Common myeloid progenitor, CD34-positive (primary cell): ENCODE measurements at regions of chr15 and their contacts with region 1.

Region 1: DNA sequence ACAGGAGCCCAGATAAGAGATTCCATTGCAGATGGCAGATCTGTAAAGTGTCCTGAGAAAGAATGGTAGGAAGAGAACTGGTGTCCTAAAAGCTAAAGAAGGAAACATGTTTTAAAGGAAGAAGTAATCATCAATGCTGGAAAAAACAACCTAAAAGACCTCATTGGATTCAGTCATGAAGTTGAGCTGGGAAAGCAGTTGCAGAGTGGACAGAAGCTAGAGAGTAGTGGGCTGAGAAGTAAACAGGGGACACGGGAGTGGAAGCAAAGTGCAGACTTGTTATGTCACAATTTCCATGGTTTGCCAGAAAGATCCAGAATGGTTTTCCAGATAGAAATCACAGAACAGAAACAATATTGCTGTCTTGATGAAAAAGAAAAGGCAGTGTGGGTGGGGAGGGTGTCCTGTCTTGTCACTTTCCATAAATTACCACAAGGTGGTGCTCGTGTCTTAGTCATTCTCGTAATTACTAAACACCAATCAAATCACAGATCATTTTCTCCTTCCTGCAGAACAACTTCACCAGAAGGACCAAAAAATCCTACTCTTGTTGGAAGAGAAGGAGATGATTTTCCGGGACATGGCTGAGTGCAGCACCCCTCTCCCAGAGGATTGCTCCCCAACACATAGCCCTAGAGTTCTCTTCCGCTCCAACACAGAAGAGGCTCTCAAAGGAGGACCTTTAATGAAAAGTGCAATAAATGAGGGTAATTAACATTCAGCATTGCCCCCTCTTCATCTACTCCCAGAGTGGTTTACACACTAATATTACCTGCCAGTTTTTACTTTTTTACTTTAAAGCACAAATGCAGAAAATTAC is 64.5 kb downstream of the KLHL25 start:
- DNase-seq: peak; percentile 59 to 79 (median 74)
- H3K4me3 ChIP-seq: no peak overlapping the region
- H3K27ac ChIP-seq: no peak overlapping the region
- H3K4me1 ChIP-seq: no peaks in the 10 kb centered on the region
- H3K27me3 ChIP-seq: no peaks in the 10 kb centered on the region

Region 2: GRCh38 chr15:85831415-85832113 is 101.4 kb after region 1 on chr15:
- CTCF ChIA-PET with region 1: interaction called, 17 read pairs
- POLR2A ChIA-PET with region 1: interaction called, 3 read pairs
- DNase-seq: peak; percentile 29 to 55 (median 51)
- H3K4me3 ChIP-seq: no peak overlapping the region
- H3K27ac ChIP-seq: no peak overlapping the region
- H3K4me1 ChIP-seq: no peaks in the 10 kb centered on the region
- H3K27me3 ChIP-seq: peaks cover 0 to 2% (median 0%) of the 10 kb centered on the region in 5 experiments

Region 3: GRCh38 chr15:85840065-85840801 is 110.0 kb after region 1 on chr15:
- CTCF ChIA-PET with region 1: interaction called, 28 read pairs
- POLR2A ChIA-PET with region 1: interaction called, 3 read pairs
- DNase-seq: peak; percentile 71 to 77 (median 73)
- H3K4me3 ChIP-seq: peak overlapping the region in 6 of 7 experiments; percentile 48 to 72 (median 56)
- H3K27ac ChIP-seq: no peak overlapping the region
- H3K4me1 ChIP-seq: peaks cover 0 to 13% (median 9%) of the 10 kb centered on the region in 4 experiments
- H3K27me3 ChIP-seq: peaks cover 0 to 4% (median 0%) of the 10 kb centered on the region in 5 experiments